ENCODE measurements at regions of chr4 and their contacts with region 1.

Region 1: GRCh38 chr4:24551492-24552289 is 32.7 kb downstream of the DHX15 start:
- DNase-seq: no peak
- H3K4me3 ChIP-seq: no peak overlapping the region
- H3K27ac ChIP-seq: no peak overlapping the region
- H3K4me1 ChIP-seq: peaks cover 3 to 14% (median 6%) of the 10 kb centered on the region in 4 experiments; a peak in 5 of 7 replicates
- H3K27me3 ChIP-seq: no peaks in the 10 kb centered on the region
- CTCF ChIP-seq: no peak
- EP300 ChIP-seq: no peak
- POLR2A ChIP-seq: no peak
- RAD21 ChIP-seq: no peak

Region 2: DNA sequence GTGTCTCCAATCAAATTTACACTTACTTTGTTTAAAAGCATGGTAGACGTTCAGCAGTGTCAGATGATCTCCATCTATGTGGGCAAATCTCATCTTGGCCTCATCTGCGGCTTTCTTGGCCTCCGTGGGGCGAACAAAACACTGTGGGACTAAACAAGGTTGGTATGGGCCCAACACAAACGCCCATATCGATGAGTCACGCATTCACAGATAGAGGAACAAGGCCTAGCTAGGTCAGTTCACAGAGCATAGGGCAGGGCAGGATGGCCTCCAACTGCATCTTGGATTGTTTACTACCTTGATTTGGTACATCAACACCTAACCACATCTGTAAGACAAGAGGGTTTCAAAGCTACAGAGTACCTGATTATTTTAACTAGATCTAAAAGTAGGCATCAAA is 14.7 kb before region 1 on chr4:
- CTCF ChIA-PET with region 1: interaction called, 23 read pairs
- POLR2A ChIA-PET with region 1: interaction called, 6 read pairs
- DNase-seq: no peak
- H3K4me3 ChIP-seq: no peak overlapping the region
- H3K27ac ChIP-seq: no peak overlapping the region
- H3K4me1 ChIP-seq: peaks cover 0 to 2% (median 0%) of the 10 kb centered on the region in 4 experiments; a peak in 1 of 7 replicates
- H3K27me3 ChIP-seq: no peaks in the 10 kb centered on the region
- CTCF ChIP-seq: no peak
- EP300 ChIP-seq: no peak
- POLR2A ChIP-seq: no peak
- RAD21 ChIP-seq: no peak